ENCODE measurements at regions of chr10 and their contacts with region 1.

Region 1: GRCh38 chr10:68550747-68551411 is 9.3 kb upstream of the TET1 start:
- DNase-seq: peak; percentile 65
- ATAC-seq: peak; percentile 82
- H3K4me3 Mint-ChIP-seq: no peak overlapping the region
- H3K27ac Mint-ChIP-seq: no peak overlapping the region
- H3K4me1 Mint-ChIP-seq: no peaks in the 10 kb centered on the region
- H3K27me3 Mint-ChIP-seq: no peaks in the 10 kb centered on the region

Region 2: GRCh38 chr10:68492118-68492517 is 58.8 kb before region 1 on chr10:
- CTCF ChIA-PET with region 1: no interaction called
- POLR2A ChIA-PET with region 1: no interaction called
- DNase-seq: no peak
- ATAC-seq: no peak
- H3K4me3 Mint-ChIP-seq: no peak overlapping the region
- H3K27ac Mint-ChIP-seq: no peak overlapping the region
- H3K4me1 Mint-ChIP-seq: no peaks in the 10 kb centered on the region
- H3K27me3 Mint-ChIP-seq: no peaks in the 10 kb centered on the region

Region 3: DNA sequence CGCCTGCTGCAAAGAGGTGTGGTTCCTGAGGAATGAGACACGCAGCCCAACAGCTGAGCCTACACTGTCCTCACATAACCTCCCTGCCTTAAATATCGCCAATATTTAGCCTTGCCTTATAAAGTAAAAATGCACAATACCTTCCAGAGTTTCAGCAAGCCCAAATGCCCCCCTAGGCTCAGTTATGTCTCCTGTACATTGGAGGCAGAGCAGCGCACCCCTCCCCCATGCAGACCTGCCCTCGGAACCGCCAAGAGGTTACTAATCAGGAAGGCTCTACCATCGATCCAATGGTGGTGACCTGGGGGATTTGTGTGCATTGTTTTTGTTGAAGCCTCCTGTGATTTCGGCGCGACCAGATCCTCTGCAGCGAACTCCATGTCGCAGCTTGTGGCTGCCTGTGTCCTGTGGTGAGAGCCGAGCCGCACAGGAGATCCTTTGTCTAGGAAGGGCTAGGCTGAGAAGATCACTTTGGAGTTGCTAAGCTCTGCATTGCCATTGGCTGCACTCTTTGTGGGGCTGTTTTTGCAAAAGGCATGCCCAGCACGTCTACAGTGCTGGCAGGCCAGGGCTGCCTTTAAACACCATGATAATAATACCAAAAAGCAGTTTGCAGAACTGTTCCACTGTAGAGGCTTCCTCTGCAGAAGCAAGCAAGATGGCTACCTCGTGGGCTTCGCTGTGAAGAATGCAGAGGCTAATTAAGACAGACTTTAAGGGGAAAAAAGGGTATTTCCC is 49.3 kb after region 1 on chr10:
- CTCF ChIA-PET with region 1: interaction called, 11 read pairs
- POLR2A ChIA-PET with region 1: no interaction called
- DNase-seq: peak; percentile 79
- ATAC-seq: peak; percentile 96
- H3K4me3 Mint-ChIP-seq: peak overlapping the region; percentile 80
- H3K27ac Mint-ChIP-seq: peak overlapping the region; percentile 92
- H3K4me1 Mint-ChIP-seq: peaks cover 36% of the 10 kb centered on the region
- H3K27me3 Mint-ChIP-seq: no peaks in the 10 kb centered on the region